Mucosa of descending colon (tissue), 3 donors: ENCODE measurements at regions of chr4 and their contacts with region 1.

Region 1: DNA sequence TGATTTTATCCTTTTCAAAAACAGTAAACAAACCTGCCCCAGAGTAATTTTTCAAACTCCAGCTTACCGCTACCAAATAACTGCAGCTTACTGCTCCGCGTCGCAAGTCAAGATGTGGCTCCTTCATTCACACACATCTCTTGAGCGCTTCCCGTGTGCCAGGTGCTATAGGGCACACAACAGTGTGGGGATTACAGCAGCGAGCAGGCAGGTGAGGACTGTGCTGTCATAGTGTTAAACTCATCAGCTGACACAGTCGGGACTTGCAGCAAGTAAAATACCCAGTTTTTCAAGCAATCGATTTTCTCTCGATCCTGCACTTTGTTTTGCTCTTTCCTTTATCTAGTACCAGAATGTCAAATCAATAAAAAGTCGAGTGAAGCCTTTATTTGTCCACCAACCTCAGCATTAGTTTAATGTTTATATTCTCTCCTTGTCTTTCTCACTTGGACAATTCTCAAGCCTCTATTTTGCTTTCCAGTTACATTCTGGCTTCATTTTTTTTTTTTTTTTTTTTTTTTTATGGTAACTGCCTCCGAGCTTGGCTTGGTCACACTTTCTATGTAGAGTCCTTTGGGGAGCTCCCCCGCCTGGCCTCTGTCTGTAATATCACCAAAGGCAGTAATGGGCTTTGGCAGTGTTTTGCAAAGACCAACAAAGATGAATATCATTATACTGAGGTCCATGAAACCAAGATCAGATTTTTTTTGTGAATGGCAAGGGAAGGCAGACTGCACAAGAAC is 8.3 kb upstream of the ASB5 start:
- DNase-seq: peak in 2 of 3 donors; percentile 54 to 60
- ATAC-seq: peak; percentile 67
- H3K4me3 ChIP-seq: no peak overlapping the region
- H3K4me1 ChIP-seq: no peaks in the 10 kb centered on the region
- CTCF ChIP-seq: no peak

Region 2: GRCh38 chr4:176340871-176341685 is 63.7 kb after region 1 on chr4:
- intact Hi-C with region 1: loop called in 1 of 2 experiments (anchors 10 kb)
- DNase-seq: peak in 1 of 3 donors; percentile 46
- ATAC-seq: peak; percentile 54
- H3K4me3 ChIP-seq: no peak overlapping the region
- H3K4me1 ChIP-seq: no peaks in the 10 kb centered on the region
- CTCF ChIP-seq: no peak